Naive thymus-derived CD4-positive, alpha-beta T cell (primary cell): ENCODE measurements at regions of chr13 and their contacts with region 1.

Region 1: DNA sequence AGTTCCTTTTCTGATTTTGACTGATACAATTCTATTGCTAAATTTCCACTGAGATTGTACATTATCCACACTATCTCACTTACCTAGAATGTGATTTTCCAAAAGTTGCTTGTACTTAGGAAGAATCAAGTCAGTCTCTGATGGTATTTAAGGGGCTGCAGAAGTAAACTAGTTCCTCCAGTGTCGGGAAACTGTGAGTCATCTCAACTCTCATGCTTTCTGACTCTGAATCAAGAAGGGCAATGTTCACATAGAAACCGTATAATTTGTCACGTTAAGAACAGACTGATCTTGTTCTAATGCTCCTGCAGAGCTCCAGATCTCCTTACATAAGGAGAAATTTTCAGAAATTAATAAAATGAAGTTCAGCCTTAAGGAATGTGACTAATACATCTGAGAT is 369.3 kb downstream of the KLF5 start:
- DNase-seq: no peak
- ATAC-seq: no peak
- H3K4me3 ChIP-seq: no peak overlapping the region
- H3K4me3 Mint-ChIP-seq: no peak overlapping the region
- H3K27ac ChIP-seq: no peak overlapping the region
- H3K27ac Mint-ChIP-seq: no peak overlapping the region
- H3K4me1 ChIP-seq: no peaks in the 10 kb centered on the region
- H3K4me1 Mint-ChIP-seq: no peaks in the 10 kb centered on the region
- H3K27me3 ChIP-seq: no peaks in the 10 kb centered on the region
- H3K27me3 Mint-ChIP-seq: peaks cover 0 to 8% (median 0%) of the 10 kb centered on the region in 5 donors

Region 2: DNA sequence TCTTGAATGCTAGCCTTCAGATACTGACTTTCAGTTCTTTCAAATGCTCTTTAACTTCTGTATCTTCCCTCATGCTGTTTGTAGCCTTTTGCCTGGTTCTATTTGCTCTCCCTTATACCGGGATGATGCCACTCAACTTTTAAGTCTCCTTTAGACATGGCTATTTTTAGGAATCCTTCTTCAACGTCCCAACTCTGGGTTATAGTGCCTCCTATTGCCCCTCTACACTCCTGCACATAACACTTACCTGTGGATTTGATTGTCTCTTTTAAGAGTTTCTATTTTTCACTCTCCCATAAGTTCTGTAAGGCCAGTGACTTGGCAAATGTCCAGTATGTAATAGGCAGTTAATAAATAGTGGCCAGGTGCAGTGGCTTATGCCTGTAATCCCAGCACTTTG is 26.4 kb before region 1 on chr13:
- CTCF ChIA-PET with region 1: no interaction called
- POLR2A ChIA-PET with region 1: no interaction called
- intact Hi-C with region 1: loop called in 1 of 2 experiments (anchors 1 kb)
- DNase-seq: no peak
- ATAC-seq: no peak
- H3K4me3 ChIP-seq: no peak overlapping the region
- H3K4me3 Mint-ChIP-seq: no peak overlapping the region
- H3K27ac ChIP-seq: no peak overlapping the region
- H3K27ac Mint-ChIP-seq: no peak overlapping the region
- H3K4me1 ChIP-seq: no peaks in the 10 kb centered on the region
- H3K4me1 Mint-ChIP-seq: no peaks in the 10 kb centered on the region
- H3K27me3 ChIP-seq: no peaks in the 10 kb centered on the region
- H3K27me3 Mint-ChIP-seq: peaks cover 0 to 7% (median 0%) of the 10 kb centered on the region in 5 donors